RWPE1 (cell line): ENCODE measurements at regions of chr1 and their contacts with region 1.

Region 1: DNA sequence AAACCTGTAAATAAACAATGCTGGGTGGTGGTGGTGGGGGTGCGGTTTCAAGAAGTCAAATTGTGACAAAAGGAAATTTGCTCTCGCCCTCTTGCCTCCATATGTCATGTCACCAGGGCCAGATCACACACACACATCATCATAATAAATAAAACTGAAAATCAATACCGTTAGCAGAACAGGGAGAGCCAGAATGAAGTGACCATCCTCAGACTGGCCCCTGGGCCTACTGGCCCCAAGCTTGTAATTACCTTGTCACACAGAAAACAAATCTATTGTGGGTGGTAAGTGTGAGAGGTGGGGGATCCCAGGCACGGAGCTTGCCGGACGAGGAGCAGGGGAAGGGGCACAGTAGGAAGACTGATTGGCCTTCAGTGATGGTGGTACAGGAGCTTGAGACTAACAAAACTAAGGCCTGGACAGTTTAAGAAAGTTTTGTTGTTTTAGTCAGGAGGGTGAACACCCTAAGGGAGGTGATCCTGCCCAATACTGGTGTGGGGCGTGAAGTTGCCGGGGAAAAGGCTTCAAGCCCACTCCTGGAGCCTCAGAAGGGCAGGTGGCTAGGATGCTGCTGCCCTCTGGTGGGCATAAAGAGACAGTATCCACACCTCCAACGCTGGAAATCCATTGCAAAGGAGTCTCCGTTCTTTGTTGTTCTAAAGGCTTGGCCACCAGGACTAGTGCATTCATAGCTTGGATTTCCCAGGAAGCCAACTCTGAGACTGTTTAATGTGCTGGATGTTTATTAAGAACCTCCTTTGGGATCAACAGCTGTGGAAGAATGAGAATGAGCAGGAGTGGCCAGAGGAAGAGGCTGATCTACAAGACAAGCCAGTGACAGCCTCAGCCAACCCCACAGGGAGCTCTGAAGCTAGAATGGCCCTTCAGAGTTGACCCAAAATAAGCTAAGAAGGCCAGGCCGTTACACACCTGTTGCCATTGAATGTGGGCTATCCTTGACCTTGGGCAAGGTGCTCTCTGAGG is 8.1 kb upstream of the C1orf216 start:
- DNase-seq: peak; percentile 57
- H3K27ac ChIP-seq: no peak overlapping the region
- CTCF ChIP-seq: peak; percentile 86

Region 2: GRCh38 chr1:35568975-35569395 is 157.8 kb before region 1 on chr1:
- CTCF ChIA-PET with region 1: interaction called, 14 read pairs
- POLR2A ChIA-PET with region 1: interaction called, 6 read pairs
- DNase-seq: peak; percentile 78
- H3K27ac ChIP-seq: no peak overlapping the region
- CTCF ChIP-seq: peak; percentile 86

Region 3: GRCh38 chr1:35715568-35716002 is 11.2 kb before region 1 on chr1:
- CTCF ChIA-PET with region 1: interaction called, 24 read pairs
- POLR2A ChIA-PET with region 1: no interaction called
- DNase-seq: peak; percentile 70
- H3K27ac ChIP-seq: peak overlapping the region; percentile 10; the same call in 1 of the 2 replicates
- CTCF ChIP-seq: peak; percentile 84